Heart left ventricle (tissue), 16 donors: ENCODE measurements at regions of chr1 and their contacts with region 1.

Region 1: GRCh38 chr1:171180670-171181069 is 4.4 kb upstream of the FMO2 start:
- DNase-seq: no peak
- ATAC-seq: no peak
- H3K4me3 ChIP-seq: no peak overlapping the region
- H3K27ac ChIP-seq: no peak overlapping the region
- H3K4me1 ChIP-seq: peaks cover 0 to 11% (median 0%) of the 10 kb centered on the region in 12 donors
- H3K27me3 ChIP-seq: no peaks in the 10 kb centered on the region
- CTCF ChIP-seq: no peak
- POLR2A ChIP-seq: no peak

Region 2: GRCh38 chr1:170562646-170563338 is 617.9 kb before region 1 on chr1:
- intact Hi-C with region 1: loop called in 1 of 10 experiments (anchors 5 kb)
- DNase-seq: peak; percentile 66 to 82 (median 71)
- ATAC-seq: peak; percentile 79 to 95 (median 88)
- H3K4me3 ChIP-seq: peak overlapping the region in 6 of 12 donors; percentile 3 to 34 (median 18)
- H3K27ac ChIP-seq: peak overlapping the region; percentile 3 to 88 (median 71)
- H3K4me1 ChIP-seq: peaks cover 0 to 29% (median 12%) of the 10 kb centered on the region in 12 donors
- H3K27me3 ChIP-seq: no peaks in the 10 kb centered on the region
- CTCF ChIP-seq: no peak
- POLR2A ChIP-seq: no peak

Region 3: GRCh38 chr1:171110621-171111326 is 69.9 kb before region 1 on chr1:
- intact Hi-C with region 1: loop called in 2 of 10 experiments (anchors 5 kb)
- DNase-seq: no peak
- ATAC-seq: peak in 3 of 4 donors; percentile 53 to 73 (median 58)
- H3K4me3 ChIP-seq: no peak overlapping the region
- H3K27ac ChIP-seq: peak overlapping the region; percentile 9 to 80 (median 56)
- H3K4me1 ChIP-seq: peaks cover 0 to 37% (median 5%) of the 10 kb centered on the region in 12 donors
- H3K27me3 ChIP-seq: no peaks in the 10 kb centered on the region
- CTCF ChIP-seq: no peak
- POLR2A ChIP-seq: no peak

Region 4: DNA sequence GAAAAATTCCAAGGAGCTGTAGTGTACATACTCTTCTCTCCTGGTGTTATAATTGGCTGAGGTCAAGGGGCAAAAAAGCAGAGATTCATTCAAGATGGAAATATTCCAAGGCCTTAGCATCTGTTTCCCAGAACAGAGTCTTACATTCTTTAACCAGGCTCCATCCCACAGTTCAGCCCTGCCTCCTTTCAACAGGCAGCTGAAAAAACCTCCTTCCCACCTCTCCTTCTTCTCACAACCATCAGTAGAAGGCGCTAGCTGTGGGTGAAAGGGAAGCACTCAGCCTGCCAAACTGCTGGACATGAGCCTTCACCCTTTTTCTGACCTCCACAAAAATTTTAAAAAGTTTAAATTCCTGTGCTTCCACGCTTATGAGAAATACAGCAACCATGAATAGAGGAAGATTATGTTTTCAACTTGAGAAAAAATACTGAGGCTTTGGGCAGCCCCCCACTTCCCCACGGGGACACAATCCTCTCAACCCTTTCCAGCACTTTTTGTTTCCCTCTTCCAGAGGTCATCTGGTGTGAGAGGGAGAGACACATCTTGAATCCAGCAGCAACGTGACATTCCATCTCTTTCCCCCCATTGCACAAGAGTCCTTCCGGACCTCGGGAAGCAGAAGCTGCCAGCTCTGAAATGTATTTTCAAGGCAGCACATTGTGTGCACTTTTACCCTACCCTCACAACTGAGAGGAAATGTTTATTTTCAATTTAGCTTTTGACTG is 38.8 kb before region 1 on chr1:
- intact Hi-C with region 1: loop called in 6 of 10 experiments (anchors 1 to 5 kb)
- DNase-seq: peak; percentile 51 to 74 (median 65)
- ATAC-seq: peak; percentile 76 to 89 (median 84)
- H3K4me3 ChIP-seq: peak overlapping the region in 4 of 12 donors; percentile 1 to 22 (median 18)
- H3K27ac ChIP-seq: peak overlapping the region; percentile 79 to 94 (median 86)
- H3K4me1 ChIP-seq: peaks cover 0 to 75% (median 49%) of the 10 kb centered on the region in 12 donors
- H3K27me3 ChIP-seq: no peaks in the 10 kb centered on the region
- CTCF ChIP-seq: peak in 7 of 12 donors; percentile 21 to 54 (median 39)
- POLR2A ChIP-seq: no peak